Naive thymus-derived CD4-positive, alpha-beta T cell (primary cell): ENCODE measurements at regions of chr7 and their contacts with region 1.

Region 1: DNA sequence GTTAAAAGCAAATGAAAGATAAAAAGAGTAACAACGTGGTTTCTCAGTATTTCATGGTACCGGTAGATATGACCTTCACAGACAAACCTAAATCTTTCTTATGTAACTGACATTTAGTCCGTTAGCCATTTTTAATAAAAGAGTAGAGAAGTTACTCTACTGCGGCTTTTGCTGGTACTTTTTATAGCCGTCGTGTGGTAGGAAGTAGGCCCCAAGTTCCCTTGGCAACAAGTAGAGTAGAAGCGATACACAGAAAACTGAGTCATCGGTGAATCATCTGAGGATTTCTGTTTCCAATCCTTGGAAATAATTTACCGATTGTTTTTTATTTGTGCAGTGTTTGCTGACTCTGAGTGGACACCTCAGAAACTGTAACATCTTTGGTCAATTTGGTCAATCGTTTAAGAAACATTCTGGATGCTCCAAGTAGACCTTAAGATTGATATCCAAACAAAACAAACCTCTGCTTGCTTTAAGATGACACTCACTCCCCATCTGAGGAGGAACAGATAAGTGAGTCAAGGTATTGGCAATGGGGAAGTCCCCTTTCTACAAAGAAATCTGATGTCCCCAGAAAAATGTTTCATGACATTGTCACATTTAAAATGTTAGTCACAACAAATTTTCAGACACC is 63.9 kb upstream of the AHR start:
- DNase-seq: peak in 8 of 9 donors; percentile 48 to 85 (median 69)
- ATAC-seq: peak; percentile 92
- H3K4me3 ChIP-seq: peak overlapping the region; percentile 47
- H3K4me3 Mint-ChIP-seq: peak overlapping the region; percentile 53 to 92 (median 76)
- H3K27ac ChIP-seq: peak overlapping the region; percentile 69
- H3K27ac Mint-ChIP-seq: peak overlapping the region; percentile 84 to 100 (median 96)
- H3K4me1 ChIP-seq: peaks cover 22 to 24% of the 10 kb centered on the region in 2 donors
- H3K4me1 Mint-ChIP-seq: peaks cover 19 to 50% (median 37%) of the 10 kb centered on the region in 7 donors
- H3K27me3 ChIP-seq: no peaks in the 10 kb centered on the region
- H3K27me3 Mint-ChIP-seq: peaks cover 0 to 4% (median 0%) of the 10 kb centered on the region in 5 donors

Region 2: DNA sequence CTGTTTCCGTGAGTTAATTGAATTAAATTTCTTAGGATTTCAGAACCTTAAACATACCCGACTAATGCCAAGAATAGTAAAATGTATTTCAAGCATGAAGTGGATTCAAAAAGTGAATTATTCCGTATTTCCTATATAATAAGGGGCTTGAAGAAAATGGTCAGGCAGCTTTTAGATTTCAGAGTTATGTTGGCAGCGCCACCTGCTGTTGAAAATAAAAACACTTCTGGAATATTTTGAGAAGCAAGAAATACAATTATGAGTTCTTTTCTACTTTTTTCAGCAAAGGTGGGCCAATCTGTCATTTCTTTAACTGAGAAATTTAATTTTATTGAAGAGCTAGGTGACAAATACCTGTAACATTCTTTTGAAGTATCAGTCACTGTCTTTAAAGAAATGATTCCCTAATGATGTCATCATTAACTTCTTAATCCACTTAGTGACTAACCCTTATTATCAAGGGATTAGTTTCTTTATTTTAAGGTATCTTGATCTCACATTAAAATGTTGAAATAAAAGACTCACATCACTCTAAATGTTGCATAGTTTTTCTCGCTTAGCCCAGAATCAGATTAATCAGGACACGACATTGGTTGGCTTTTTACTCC is 316.1 kb before region 1 on chr7:
- CTCF ChIA-PET with region 1: no interaction called
- POLR2A ChIA-PET with region 1: no interaction called
- intact Hi-C with region 1: loop called in 1 of 2 experiments (anchors 5 kb)
- DNase-seq: peak in 3 of 9 donors; percentile 13 to 35 (median 25)
- ATAC-seq: no peak
- H3K4me3 ChIP-seq: no peak overlapping the region
- H3K4me3 Mint-ChIP-seq: no peak overlapping the region
- H3K27ac ChIP-seq: no peak overlapping the region
- H3K27ac Mint-ChIP-seq: no peak overlapping the region
- H3K4me1 ChIP-seq: peaks cover 0 to 4% of the 10 kb centered on the region in 2 donors
- H3K4me1 Mint-ChIP-seq: peaks cover 0 to 17% (median 7%) of the 10 kb centered on the region in 7 donors
- H3K27me3 ChIP-seq: no peaks in the 10 kb centered on the region
- H3K27me3 Mint-ChIP-seq: peaks cover 0 to 7% (median 0%) of the 10 kb centered on the region in 5 donors

Region 3: GRCh38 chr7:17009007-17009719 is 225.4 kb before region 1 on chr7:
- CTCF ChIA-PET with region 1: no interaction called
- POLR2A ChIA-PET with region 1: no interaction called
- intact Hi-C with region 1: loop called in 1 of 2 experiments (anchors 2 kb)
- DNase-seq: peak in 2 of 9 donors; percentile 5 to 6
- ATAC-seq: peak; percentile 73
- H3K4me3 ChIP-seq: no peak overlapping the region
- H3K4me3 Mint-ChIP-seq: no peak overlapping the region
- H3K27ac ChIP-seq: no peak overlapping the region
- H3K27ac Mint-ChIP-seq: no peak overlapping the region
- H3K4me1 ChIP-seq: peaks cover 0 to 8% of the 10 kb centered on the region in 2 donors
- H3K4me1 Mint-ChIP-seq: peaks cover 5 to 33% (median 11%) of the 10 kb centered on the region in 7 donors
- H3K27me3 ChIP-seq: no peaks in the 10 kb centered on the region
- H3K27me3 Mint-ChIP-seq: peaks cover 0 to 16% (median 0%) of the 10 kb centered on the region in 5 donors

Region 4: DNA sequence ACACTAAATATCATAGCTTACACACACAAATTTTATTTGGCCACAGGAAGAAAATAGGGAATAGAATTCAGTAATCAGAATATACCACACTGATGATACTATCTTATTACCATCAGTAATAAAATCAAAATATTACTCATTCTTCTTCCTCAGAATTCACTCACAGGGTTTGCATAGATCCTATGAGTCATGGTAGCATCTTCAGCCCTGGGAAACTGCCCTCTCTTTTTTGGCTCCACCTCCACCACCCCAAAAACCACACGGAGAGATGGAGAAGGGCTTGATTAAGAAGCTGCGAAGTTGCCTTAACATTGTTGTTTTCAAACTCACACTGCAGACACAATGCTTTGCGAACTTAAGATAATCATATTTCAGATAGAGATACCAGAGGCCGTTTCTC is 90.2 kb before region 1 on chr7:
- CTCF ChIA-PET with region 1: no interaction called
- POLR2A ChIA-PET with region 1: no interaction called
- intact Hi-C with region 1: loop called (anchors 1 kb)
- DNase-seq: peak in 1 of 9 donors; percentile 69
- ATAC-seq: peak; percentile 82
- H3K4me3 ChIP-seq: peak overlapping the region; percentile 6
- H3K4me3 Mint-ChIP-seq: peak overlapping the region in 9 of 10 donors; percentile 26 to 85 (median 49)
- H3K27ac ChIP-seq: no peak overlapping the region
- H3K27ac Mint-ChIP-seq: peak overlapping the region in 8 of 9 donors; percentile 0 to 91 (median 55)
- H3K4me1 ChIP-seq: peaks cover 26 to 35% of the 10 kb centered on the region in 2 donors
- H3K4me1 Mint-ChIP-seq: peaks cover 21 to 57% (median 46%) of the 10 kb centered on the region in 7 donors
- H3K27me3 ChIP-seq: no peaks in the 10 kb centered on the region
- H3K27me3 Mint-ChIP-seq: no peaks in the 10 kb centered on the region

Region 5: DNA sequence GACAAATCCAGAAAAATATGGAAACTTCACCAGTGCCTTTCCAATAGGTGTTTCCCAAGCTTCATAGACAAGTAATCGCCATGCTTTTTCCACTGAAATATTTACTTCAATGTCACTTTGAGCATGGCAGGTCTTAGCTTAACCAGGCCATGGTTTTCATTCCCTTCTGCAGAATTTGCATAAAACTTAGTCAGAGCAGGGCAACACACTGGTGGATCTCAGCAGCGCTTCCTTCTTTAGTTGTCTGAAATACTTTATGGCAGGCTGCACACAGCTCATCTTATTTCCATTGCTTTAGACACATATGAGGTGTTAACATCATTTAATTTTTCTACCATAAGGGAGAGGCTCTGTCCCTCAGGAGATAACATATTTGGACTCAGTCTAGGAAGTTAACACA is 38.9 kb before region 1 on chr7:
- CTCF ChIA-PET with region 1: no interaction called
- POLR2A ChIA-PET with region 1: no interaction called
- intact Hi-C with region 1: loop called in 1 of 2 experiments (anchors 2 kb)
- DNase-seq: no peak
- ATAC-seq: no peak
- H3K4me3 ChIP-seq: no peak overlapping the region
- H3K4me3 Mint-ChIP-seq: no peak overlapping the region
- H3K27ac ChIP-seq: no peak overlapping the region
- H3K27ac Mint-ChIP-seq: no peak overlapping the region
- H3K4me1 ChIP-seq: no peaks in the 10 kb centered on the region
- H3K4me1 Mint-ChIP-seq: peaks cover 0 to 10% (median 0%) of the 10 kb centered on the region in 7 donors
- H3K27me3 ChIP-seq: no peaks in the 10 kb centered on the region
- H3K27me3 Mint-ChIP-seq: no peaks in the 10 kb centered on the region

Region 6: GRCh38 chr7:17298207-17298839 is 63.8 kb after region 1 on chr7 and contains the start of gene AHR:
- CTCF ChIA-PET with region 1: interaction called, 3 read pairs
- POLR2A ChIA-PET with region 1: interaction called, 3 read pairs
- intact Hi-C with region 1: loop called (anchors 1 kb)
- DNase-seq: peak; percentile 66 to 91 (median 81)
- ATAC-seq: peak; percentile 91
- H3K4me3 ChIP-seq: peak within 1 kb of the TSS; percentile 70
- H3K4me3 Mint-ChIP-seq: peak within 1 kb of the TSS; percentile 86 to 98 (median 90)
- H3K27ac ChIP-seq: peak within 1 kb of the TSS; percentile 89
- H3K27ac Mint-ChIP-seq: peak within 1 kb of the TSS; percentile 87 to 97 (median 91)
- H3K4me1 ChIP-seq: peaks cover 9 to 19% of the 10 kb centered on the region in 2 donors
- H3K4me1 Mint-ChIP-seq: peaks cover 19 to 40% (median 27%) of the 10 kb centered on the region in 7 donors
- H3K27me3 ChIP-seq: no peaks in the 10 kb centered on the region
- H3K27me3 Mint-ChIP-seq: no peaks in the 10 kb centered on the region
- total RNA-seq, gene AHR: 15.7 to 109 (median 28.2) TPM